ENCODE measurements at regions of chr14 and their contacts with region 1.

Region 1: DNA sequence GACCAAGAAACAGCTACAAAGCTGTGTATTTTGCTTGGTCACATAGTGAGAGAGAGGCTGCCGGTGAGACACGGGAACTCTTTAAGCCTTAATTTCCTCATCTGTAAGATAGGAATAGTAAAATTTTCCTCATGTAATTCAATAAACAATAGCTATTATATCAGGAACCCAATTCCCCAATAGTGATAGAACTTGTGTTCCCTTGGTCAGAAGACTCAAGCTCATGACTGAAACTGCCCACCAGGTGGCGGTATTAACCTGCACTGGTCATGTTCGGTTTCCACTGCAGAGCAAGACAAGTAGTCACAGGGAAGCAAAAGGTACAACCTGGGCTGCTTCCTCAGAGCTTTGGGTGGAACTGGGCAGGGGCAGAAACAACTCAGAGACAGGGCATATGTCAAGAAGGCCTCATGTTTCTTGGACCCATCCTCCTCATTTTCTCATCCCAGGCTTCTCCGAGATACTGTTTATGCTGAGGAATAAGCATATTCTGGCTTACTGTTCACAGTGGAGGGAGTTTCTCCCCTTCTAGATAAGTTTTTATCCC is 4.2 kb upstream of the AJUBA start:
- DNase-seq: peak; percentile 77 to 93 (median 89)
- ATAC-seq: peak; percentile 69
- H3K4me3 ChIP-seq: no peak overlapping the region
- H3K4me3 Mint-ChIP-seq: no peak overlapping the region
- H3K27ac ChIP-seq: no peak overlapping the region
- H3K27ac Mint-ChIP-seq: no peak overlapping the region
- H3K4me1 ChIP-seq: peaks cover 7% of the 10 kb centered on the region
- H3K4me1 Mint-ChIP-seq: no peaks in the 10 kb centered on the region
- H3K27me3 ChIP-seq: peaks cover 0 to 6% of the 10 kb centered on the region in 2 experiments
- H3K27me3 Mint-ChIP-seq: no peaks in the 10 kb centered on the region
- CTCF ChIP-seq: peak; percentile 96

Region 2: DNA sequence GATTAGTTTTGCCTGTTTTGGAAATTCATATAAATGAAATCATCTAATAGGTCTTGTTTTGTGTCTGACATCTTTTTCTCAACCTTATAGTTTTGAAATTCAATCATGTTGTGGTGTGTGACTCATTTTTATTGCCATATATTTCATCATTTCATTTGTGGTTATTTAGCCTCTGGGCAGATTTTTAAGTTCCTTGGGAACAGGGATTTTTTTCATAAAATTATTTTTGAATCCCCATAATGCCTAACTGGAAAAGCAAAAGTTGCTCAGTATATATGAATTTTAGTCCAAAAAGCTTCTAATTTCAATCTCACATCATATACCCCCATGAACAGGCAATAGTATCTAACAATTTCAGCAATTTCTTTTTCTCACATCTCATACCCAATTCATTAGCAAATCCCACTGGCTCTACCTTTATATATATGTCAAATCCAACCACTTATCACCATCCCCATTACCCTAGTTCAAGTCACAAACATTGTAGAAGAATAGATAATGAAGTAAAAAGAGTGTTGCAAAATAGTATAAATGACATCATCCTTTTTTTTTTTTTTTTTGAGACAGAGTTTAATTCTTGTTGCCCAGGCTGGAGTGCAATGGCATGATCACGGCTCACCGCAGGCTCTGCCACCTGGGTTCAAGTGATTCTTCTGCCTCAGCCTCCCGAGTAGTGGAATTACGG is 339.9 kb before region 1 on chr14:
- CTCF ChIA-PET with region 1: no interaction called
- POLR2A ChIA-PET with region 1: no interaction called
- intact Hi-C with region 1: no loop called
- DNase-seq: no peak
- ATAC-seq: no peak
- H3K4me3 ChIP-seq: no peak overlapping the region
- H3K4me3 Mint-ChIP-seq: no peak overlapping the region
- H3K27ac ChIP-seq: no peak overlapping the region
- H3K27ac Mint-ChIP-seq: no peak overlapping the region
- H3K4me1 ChIP-seq: no peaks in the 10 kb centered on the region
- H3K4me1 Mint-ChIP-seq: peaks cover 3% of the 10 kb centered on the region
- H3K27me3 ChIP-seq: no peaks in the 10 kb centered on the region
- H3K27me3 Mint-ChIP-seq: no peaks in the 10 kb centered on the region
- CTCF ChIP-seq: no peak

Region 3: GRCh38 chr14:22929104-22929847 is 57.3 kb before region 1 on chr14 and contains the start of gene PRMT5:
- CTCF ChIA-PET with region 1: interaction called, 18 read pairs
- POLR2A ChIA-PET with region 1: interaction called, 4 read pairs
- intact Hi-C with region 1: loop called (anchors 1 kb)
- DNase-seq: peak; percentile 92 to 100 (median 97)
- ATAC-seq: peak; percentile 96
- H3K4me3 ChIP-seq: peak within 1 kb of the TSS; percentile 93 to 97
- H3K4me3 Mint-ChIP-seq: no peak within 1 kb of the TSS
- H3K27ac ChIP-seq: peak within 1 kb of the TSS; percentile 74 to 93
- H3K27ac Mint-ChIP-seq: no peak within 1 kb of the TSS
- H3K4me1 ChIP-seq: peaks cover 10% of the 10 kb centered on the region
- H3K4me1 Mint-ChIP-seq: peaks cover 21% of the 10 kb centered on the region
- H3K27me3 ChIP-seq: no peaks in the 10 kb centered on the region
- H3K27me3 Mint-ChIP-seq: no peaks in the 10 kb centered on the region
- CTCF ChIP-seq: no peak
- total RNA-seq, gene PRMT5: 14.3 to 15.2 TPM

Region 4: GRCh38 chr14:22955702-22956569 is 30.6 kb before region 1 on chr14:
- CTCF ChIA-PET with region 1: interaction called, 12 read pairs
- POLR2A ChIA-PET with region 1: interaction called, 3 read pairs
- intact Hi-C with region 1: loop called (anchors 1 to 2 kb)
- DNase-seq: no peak
- ATAC-seq: no peak
- H3K4me3 ChIP-seq: peak overlapping the region; percentile 79 to 95
- H3K4me3 Mint-ChIP-seq: peak overlapping the region; percentile 90
- H3K27ac ChIP-seq: peak overlapping the region; percentile 69 to 84
- H3K27ac Mint-ChIP-seq: peak overlapping the region; percentile 91
- H3K4me1 ChIP-seq: peaks cover 16% of the 10 kb centered on the region
- H3K4me1 Mint-ChIP-seq: peaks cover 16% of the 10 kb centered on the region
- H3K27me3 ChIP-seq: no peaks in the 10 kb centered on the region
- H3K27me3 Mint-ChIP-seq: no peaks in the 10 kb centered on the region
- CTCF ChIP-seq: no peak

Region 5: GRCh38 chr14:23006544-23007419 is 20.2 kb after region 1 on chr14:
- CTCF ChIA-PET with region 1: interaction called, 59 read pairs
- POLR2A ChIA-PET with region 1: interaction called, 9 read pairs
- intact Hi-C with region 1: loop called in 1 of 2 experiments (anchors 1 kb)
- DNase-seq: peak; percentile 93 to 99 (median 96)
- ATAC-seq: peak; percentile 92
- H3K4me3 ChIP-seq: peak overlapping the region; percentile 84 to 87
- H3K4me3 Mint-ChIP-seq: peak overlapping the region; percentile 90
- H3K27ac ChIP-seq: peak overlapping the region; percentile 80 to 84
- H3K27ac Mint-ChIP-seq: peak overlapping the region; percentile 98
- H3K4me1 ChIP-seq: peaks cover 20% of the 10 kb centered on the region
- H3K4me1 Mint-ChIP-seq: peaks cover 41% of the 10 kb centered on the region
- H3K27me3 ChIP-seq: no peaks in the 10 kb centered on the region
- H3K27me3 Mint-ChIP-seq: no peaks in the 10 kb centered on the region
- CTCF ChIP-seq: no peak

Region 6: GRCh38 chr14:23034483-23035302 is 48.1 kb after region 1 on chr14 and contains the start of gene PSMB5:
- CTCF ChIA-PET with region 1: interaction called, 8 read pairs
- POLR2A ChIA-PET with region 1: no interaction called
- intact Hi-C with region 1: loop called in 1 of 2 experiments (anchors 2 kb)
- DNase-seq: peak; percentile 74 to 97 (median 87)
- ATAC-seq: peak; percentile 91
- H3K4me3 ChIP-seq: peak within 1 kb of the TSS; percentile 67 to 71
- H3K4me3 Mint-ChIP-seq: peak within 1 kb of the TSS; percentile 90
- H3K27ac ChIP-seq: peak within 1 kb of the TSS; percentile 75 to 97
- H3K27ac Mint-ChIP-seq: peak within 1 kb of the TSS; percentile 98
- H3K4me1 ChIP-seq: peaks cover 21% of the 10 kb centered on the region
- H3K4me1 Mint-ChIP-seq: peaks cover 34% of the 10 kb centered on the region
- H3K27me3 ChIP-seq: no peaks in the 10 kb centered on the region
- H3K27me3 Mint-ChIP-seq: no peaks in the 10 kb centered on the region
- CTCF ChIP-seq: no peak
- total RNA-seq, gene PSMB5: 18.6 to 20.2 TPM

Region 7: GRCh38 chr14:23076785-23077408 is 90.3 kb after region 1 on chr14:
- CTCF ChIA-PET with region 1: interaction called, 18 read pairs
- POLR2A ChIA-PET with region 1: no interaction called
- intact Hi-C with region 1: no loop called
- DNase-seq: peak in 3 of 9 experiments; percentile 43 to 66 (median 56)
- ATAC-seq: peak; percentile 89
- H3K4me3 ChIP-seq: no peak overlapping the region
- H3K4me3 Mint-ChIP-seq: no peak overlapping the region
- H3K27ac ChIP-seq: no peak overlapping the region
- H3K27ac Mint-ChIP-seq: no peak overlapping the region
- H3K4me1 ChIP-seq: peaks cover 2% of the 10 kb centered on the region
- H3K4me1 Mint-ChIP-seq: peaks cover 19% of the 10 kb centered on the region
- H3K27me3 ChIP-seq: no peaks in the 10 kb centered on the region
- H3K27me3 Mint-ChIP-seq: no peaks in the 10 kb centered on the region
- CTCF ChIP-seq: peak; percentile 85

Measured in CD8-positive, alpha-beta T cell (primary cell).